A673 (cell line): ENCODE measurements at regions of chr14 and their contacts with region 1.

Region 1: DNA sequence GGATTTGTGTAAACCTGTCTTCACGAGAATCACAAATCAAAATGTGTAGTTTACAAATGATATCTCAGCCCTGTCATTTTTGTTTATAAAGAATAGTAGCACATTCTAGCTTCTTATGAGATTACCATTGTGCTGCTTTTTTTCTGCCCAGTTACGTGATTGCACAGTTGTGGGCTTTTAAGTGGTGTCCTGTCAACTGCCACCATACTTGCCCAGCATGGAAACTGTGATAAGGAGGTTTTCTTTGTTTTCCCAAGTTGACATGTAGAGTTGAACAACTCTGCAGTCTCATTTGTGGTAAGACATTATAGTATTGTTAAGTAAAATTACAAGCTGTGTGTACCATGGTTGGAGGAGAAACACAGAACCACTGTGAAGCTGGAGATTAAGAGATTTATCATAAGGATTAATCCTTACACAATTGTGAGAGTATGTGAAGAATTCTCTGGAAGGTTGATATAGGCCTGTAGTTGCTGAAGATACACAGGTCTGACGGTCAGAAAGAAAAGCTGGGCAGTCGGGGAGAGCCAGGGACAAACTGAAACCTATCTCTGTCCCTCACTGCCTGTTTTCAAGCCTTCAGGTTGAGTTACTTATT is 12.2 kb downstream of the CHURC1 start:
- DNase-seq: no peak
- H3K4me3 ChIP-seq: no peak overlapping the region
- H3K27ac ChIP-seq: no peak overlapping the region
- H3K4me1 ChIP-seq: peaks cover 9% of the 10 kb centered on the region
- H3K27me3 ChIP-seq: no peaks in the 10 kb centered on the region
- CTCF ChIP-seq: no peak

Region 2: GRCh38 chr14:64937821-64938193 is 11.3 kb after region 1 on chr14:
- CTCF ChIA-PET with region 1: no interaction called
- POLR2A ChIA-PET with region 1: interaction called, 14 read pairs
- intact Hi-C with region 1: no loop called
- DNase-seq: no peak
- H3K4me3 ChIP-seq: no peak overlapping the region
- H3K27ac ChIP-seq: no peak overlapping the region
- H3K4me1 ChIP-seq: peaks cover 19% of the 10 kb centered on the region
- H3K27me3 ChIP-seq: no peaks in the 10 kb centered on the region
- CTCF ChIP-seq: peak; percentile 25; the same call in 1 of the 2 replicates

Region 3: DNA sequence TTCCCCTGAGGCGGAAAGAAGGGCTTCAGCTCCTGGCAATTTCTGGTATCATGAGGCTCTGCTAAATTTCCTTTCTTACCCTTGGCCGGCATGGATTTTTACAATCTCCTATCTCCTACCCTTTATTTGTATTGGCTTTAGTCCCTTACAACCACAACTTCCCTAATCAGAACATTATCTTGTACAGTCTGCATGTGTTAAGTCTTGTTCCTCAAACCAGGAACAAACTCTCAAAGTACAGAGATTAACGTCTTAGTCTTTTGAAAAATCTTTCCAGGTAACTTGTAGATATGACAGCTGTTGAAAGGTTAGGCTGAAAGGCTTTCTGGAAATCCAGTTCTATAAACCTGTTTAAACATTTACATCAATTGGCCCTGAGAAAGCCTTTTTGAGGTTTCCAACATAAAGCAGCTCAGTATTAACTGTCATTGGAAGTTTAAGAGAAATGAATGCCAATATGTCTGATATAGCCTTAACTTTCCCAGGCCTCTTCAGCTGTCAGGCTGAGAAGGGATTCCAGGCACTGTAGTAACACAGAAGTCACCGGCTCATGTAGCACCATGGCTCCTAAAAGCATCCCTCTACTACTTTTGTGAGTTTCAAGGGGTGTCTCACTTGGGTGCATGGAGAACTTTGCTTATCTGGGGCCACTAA is 846.6 kb after region 1 on chr14:
- CTCF ChIA-PET with region 1: no interaction called
- POLR2A ChIA-PET with region 1: no interaction called
- intact Hi-C with region 1: no loop called
- DNase-seq: no peak
- H3K4me3 ChIP-seq: no peak overlapping the region
- H3K27ac ChIP-seq: no peak overlapping the region
- H3K4me1 ChIP-seq: no peaks in the 10 kb centered on the region
- H3K27me3 ChIP-seq: no peaks in the 10 kb centered on the region
- CTCF ChIP-seq: no peak